ENCODE measurements at regions of chr13 and their contacts with region 1.

Region 1: DNA sequence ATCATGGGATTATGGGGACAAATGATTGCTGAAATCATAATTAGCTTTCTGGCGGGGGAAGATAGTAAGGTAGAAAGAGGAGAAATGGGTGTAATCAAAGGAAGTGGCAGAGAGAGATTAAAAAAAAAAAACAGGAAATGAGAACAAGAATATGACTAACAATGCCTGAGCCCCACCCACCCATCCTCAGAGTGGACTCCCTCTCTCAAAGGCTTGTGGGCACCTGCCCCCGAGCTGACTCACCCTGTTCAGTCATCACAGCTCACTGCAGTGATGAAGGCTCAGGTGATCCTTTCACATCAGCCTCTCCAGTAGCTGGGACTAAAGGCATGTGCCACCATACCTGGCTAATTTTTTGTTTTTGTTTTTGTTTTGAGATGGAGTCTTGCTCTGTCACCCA is 26.4 kb upstream of the TPT1 start:
- H3K4me3 ChIP-seq: no peak overlapping the region
- H3K27ac ChIP-seq: no peak overlapping the region
- H3K4me1 ChIP-seq: peaks cover 1% of the 10 kb centered on the region; the same call in 1 of the 2 replicates
- CTCF ChIP-seq: no peak

Region 2: GRCh38 chr13:45055198-45055901 is 312.0 kb before region 1 on chr13:
- CTCF ChIA-PET with region 1: no interaction called
- POLR2A ChIA-PET with region 1: no interaction called
- H3K4me3 ChIP-seq: no peak overlapping the region
- H3K27ac ChIP-seq: no peak overlapping the region
- H3K4me1 ChIP-seq: no peaks in the 10 kb centered on the region
- CTCF ChIP-seq: no peak

Region 3: DNA sequence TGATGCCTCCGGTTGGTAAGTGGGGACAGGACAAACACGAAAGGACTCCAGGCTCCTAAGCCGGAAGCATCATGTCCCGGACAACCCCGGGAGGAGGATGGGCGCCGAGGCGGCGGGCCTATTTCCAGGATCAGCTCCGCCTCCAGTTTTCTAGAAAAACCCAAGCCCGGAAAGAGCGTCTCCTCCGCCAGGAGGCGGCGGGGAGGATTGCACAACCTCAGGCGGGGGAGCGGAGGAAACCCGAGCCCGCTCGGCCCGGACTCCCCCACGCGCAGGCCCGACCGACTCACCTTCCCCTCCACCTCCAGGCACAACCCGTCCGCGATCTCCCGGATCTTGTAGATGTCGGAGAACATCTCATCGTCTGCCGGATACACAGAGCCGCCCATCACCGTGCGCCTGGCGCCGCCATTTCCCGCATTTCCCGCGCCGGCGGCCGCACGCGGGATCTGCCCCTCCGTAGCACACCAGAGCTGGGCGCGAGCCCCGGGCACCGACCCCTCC is 26.9 kb before region 1 on chr13:
- CTCF ChIA-PET with region 1: interaction called, 5 read pairs
- POLR2A ChIA-PET with region 1: interaction called, 10 read pairs
- H3K4me3 ChIP-seq: peak overlapping the region; percentile 80
- H3K27ac ChIP-seq: peak overlapping the region; percentile 91
- H3K4me1 ChIP-seq: peaks cover 12% of the 10 kb centered on the region
- CTCF ChIP-seq: no peak

Region 4: DNA sequence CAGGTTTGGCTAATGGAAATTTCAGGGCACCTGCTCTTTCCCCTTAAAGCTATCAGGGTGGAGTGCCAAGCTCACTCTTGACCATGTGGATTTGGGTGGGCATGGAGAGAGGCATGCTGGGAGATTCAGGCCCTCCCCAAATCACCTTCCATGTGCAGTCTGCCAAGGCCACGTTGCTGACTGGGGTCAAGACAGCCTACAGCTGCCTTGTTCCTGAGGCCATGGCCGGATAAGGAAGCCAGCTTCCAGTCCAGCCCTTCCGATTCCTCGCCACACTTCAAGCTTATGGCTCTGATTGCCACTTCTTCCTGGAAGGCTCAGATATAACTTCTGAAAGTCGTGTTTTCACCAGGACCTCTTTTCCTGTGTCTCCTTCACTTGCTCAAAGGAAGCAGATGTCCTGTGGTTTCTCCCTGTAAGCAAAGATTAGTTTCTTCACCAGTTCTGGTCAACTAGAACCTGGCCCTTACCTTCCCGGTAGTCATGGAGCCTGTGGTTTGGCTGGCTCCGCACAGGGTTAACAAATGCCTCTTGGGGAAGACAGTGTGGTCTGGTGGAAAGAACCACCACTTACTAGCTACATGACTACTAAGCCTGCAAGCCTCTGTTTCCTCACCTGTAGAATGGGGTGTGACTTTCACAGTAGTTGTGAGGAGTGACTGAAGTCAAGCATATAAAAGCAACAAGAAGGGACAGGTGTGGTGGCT is 10.2 kb before region 1 on chr13:
- CTCF ChIA-PET with region 1: no interaction called
- POLR2A ChIA-PET with region 1: no interaction called
- H3K4me3 ChIP-seq: no peak overlapping the region
- H3K27ac ChIP-seq: no peak overlapping the region
- H3K4me1 ChIP-seq: no peaks in the 10 kb centered on the region
- CTCF ChIP-seq: no peak

Region 5: GRCh38 chr13:45393941-45394570 is 26.7 kb after region 1 on chr13:
- CTCF ChIA-PET with region 1: interaction called, 23 read pairs
- POLR2A ChIA-PET with region 1: no interaction called
- H3K4me3 ChIP-seq: no peak overlapping the region
- H3K27ac ChIP-seq: no peak overlapping the region
- H3K4me1 ChIP-seq: 0 out of 2 replicates have a peak, but pooled peaks cover 3% of the 10 kb centered on the region
- CTCF ChIP-seq: no peak

Region 6: DNA sequence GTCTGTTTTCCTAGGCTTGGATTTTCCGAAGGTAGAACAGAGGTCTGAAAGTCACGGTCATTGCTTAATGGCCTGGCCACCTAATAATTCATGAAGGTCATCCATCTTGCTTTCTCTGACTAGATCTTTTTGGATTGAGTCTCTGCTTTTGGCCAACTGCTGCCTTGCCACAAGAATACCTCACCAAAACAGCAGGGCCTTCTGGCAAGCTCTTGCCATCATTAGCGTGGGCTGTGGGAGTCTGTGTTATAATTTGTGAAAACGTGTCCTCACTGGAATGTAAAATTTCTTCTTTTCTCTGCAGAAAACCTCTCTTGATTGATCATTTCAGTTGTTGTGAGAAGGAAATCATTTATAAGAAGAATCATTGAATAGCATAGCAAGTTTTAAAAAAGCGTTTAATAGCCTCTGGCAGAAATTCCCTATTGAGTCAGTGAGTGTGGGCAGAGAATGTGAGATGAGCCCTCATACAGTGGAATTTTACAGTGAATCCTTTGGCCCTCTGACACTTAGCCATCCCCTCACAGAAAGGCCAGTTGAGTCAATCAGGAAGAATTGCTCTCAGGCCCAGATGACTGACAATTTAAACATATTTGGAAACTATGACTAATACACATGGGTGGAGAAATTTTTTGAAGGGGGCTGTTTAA is 291.4 kb after region 1 on chr13:
- CTCF ChIA-PET with region 1: no interaction called
- POLR2A ChIA-PET with region 1: no interaction called
- H3K4me3 ChIP-seq: no peak overlapping the region
- H3K27ac ChIP-seq: no peak overlapping the region
- H3K4me1 ChIP-seq: no peaks in the 10 kb centered on the region
- CTCF ChIP-seq: no peak

Measured in HEK293 (cell line).